Mammary epithelial cell (primary cell): ENCODE measurements at regions of chr1 and their contacts with region 1.

Region 1: GRCh38 chr1:187476671-187477070 is 647.9 kb downstream of the PLA2G4A start:
- DNase-seq: no peak
- H3K4me3 ChIP-seq: no peak overlapping the region
- H3K27ac ChIP-seq: no peak overlapping the region
- H3K4me1 ChIP-seq: no peaks in the 10 kb centered on the region
- H3K27me3 ChIP-seq: no peaks in the 10 kb centered on the region
- CTCF ChIP-seq: peak; percentile 22 to 33

Region 2: GRCh38 chr1:187537936-187538335 is 61.3 kb after region 1 on chr1:
- CTCF ChIA-PET with region 1: no interaction called
- dilution Hi-C with region 1: no loop called
- in situ Hi-C with region 1: no loop called
- intact Hi-C with region 1: no loop called
- DNase-seq: no peak
- H3K4me3 ChIP-seq: no peak overlapping the region
- H3K27ac ChIP-seq: no peak overlapping the region
- H3K4me1 ChIP-seq: no peaks in the 10 kb centered on the region
- H3K27me3 ChIP-seq: no peaks in the 10 kb centered on the region
- CTCF ChIP-seq: no peak

Region 3: DNA sequence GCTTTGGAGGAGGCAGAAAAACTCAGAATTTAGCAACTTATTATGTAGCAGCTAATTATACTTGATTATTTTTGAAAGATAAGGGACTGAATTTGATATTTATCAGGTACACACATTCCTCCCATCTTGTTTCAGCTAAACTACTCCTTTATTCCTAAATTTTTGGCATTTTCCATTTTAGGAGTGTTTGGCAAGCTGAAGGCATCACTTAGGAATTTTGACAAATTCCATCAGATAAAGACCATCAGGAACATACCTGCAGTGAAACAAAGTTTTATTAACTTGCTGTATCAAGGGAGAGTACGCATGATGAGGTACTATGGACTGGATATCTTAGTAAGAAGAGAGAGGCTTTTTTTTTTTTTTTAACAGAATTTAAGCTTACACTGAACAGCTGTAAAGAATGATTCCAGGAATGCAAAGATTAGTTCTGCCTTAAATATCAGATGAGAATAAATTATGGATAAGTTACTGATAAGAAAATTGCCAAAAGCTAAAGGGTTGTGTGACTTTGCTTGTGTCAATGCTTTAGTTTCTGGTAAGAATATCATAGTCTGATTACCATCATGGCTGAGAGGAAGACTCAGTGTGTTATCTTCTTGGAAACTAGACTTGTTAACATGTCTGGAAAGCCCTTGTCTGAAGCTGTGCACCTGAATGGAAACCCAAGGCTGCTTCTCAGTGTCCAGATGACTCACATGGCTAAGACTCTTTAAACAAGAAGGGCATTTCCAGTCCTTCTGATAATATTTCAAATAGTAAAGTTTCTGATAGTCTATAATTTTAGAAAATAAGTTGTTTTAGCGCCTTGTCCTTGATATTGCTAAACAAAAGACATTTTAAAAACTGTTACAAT is 444.5 kb after region 1 on chr1:
- CTCF ChIA-PET with region 1: no interaction called
- dilution Hi-C with region 1: no loop called
- in situ Hi-C with region 1: no loop called
- intact Hi-C with region 1: loop called (anchors 5 kb)
- DNase-seq: no peak
- H3K4me3 ChIP-seq: no peak overlapping the region
- H3K27ac ChIP-seq: no peak overlapping the region
- H3K4me1 ChIP-seq: no peaks in the 10 kb centered on the region
- H3K27me3 ChIP-seq: peaks cover 3% of the 10 kb centered on the region
- CTCF ChIP-seq: no peak

Region 4: GRCh38 chr1:188128761-188129160 is 652.1 kb after region 1 on chr1:
- CTCF ChIA-PET with region 1: no interaction called
- dilution Hi-C with region 1: no loop called
- in situ Hi-C with region 1: no loop called
- intact Hi-C with region 1: loop called (anchors 5 kb)
- DNase-seq: peak; percentile 35
- H3K4me3 ChIP-seq: no peak overlapping the region
- H3K27ac ChIP-seq: no peak overlapping the region
- H3K4me1 ChIP-seq: no peaks in the 10 kb centered on the region
- H3K27me3 ChIP-seq: no peaks in the 10 kb centered on the region
- CTCF ChIP-seq: peak in 1 of 2 donors; percentile 54